ENCODE measurements at regions of chr14 and their contacts with region 1.

Region 1: GRCh38 chr14:59189786-59190771 is 1.6 kb downstream of the DAAM1 start:
- DNase-seq: peak; percentile 94 to 95
- ATAC-seq: peak; percentile 54

Region 2: GRCh38 chr14:58969951-58970751 is 219.9 kb before region 1 on chr14:
- intact Hi-C with region 1: no loop called
- DNase-seq: no peak
- ATAC-seq: no peak

Region 3: DNA sequence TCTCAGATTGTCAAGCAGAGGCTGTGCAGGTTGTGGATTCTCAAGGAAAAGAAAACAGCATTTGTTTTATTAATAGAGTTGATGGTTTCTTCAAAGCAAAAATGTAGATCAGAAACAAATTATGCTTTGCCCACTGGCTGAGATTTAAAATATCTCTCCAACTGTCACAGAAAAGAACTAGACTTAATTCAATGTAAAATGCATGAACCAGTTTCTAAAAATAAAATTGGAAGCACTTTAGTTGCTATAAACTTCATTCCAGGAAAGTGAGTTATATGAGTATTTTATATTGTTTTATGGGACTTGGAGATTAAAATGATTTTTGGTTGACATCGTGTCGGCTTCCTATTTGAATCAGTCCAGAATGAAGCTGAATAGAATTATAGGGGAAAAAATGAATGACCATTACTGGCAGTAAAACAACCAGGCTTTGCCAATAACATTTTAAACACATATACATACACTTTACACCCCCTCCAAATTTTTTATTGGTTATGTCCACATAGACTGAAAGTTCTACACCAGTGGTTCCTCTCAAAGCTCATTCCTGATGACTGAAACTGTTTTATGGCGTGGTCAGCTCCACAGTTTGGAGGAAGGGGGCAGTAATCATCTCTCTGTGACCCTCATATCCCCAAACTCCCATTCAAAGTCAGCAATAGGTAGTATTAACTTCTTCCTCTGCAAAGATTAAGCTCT is 57.1 kb before region 1 on chr14:
- intact Hi-C with region 1: loop called in 1 of 2 experiments (anchors 10 kb)
- DNase-seq: no peak
- ATAC-seq: peak; percentile 36

Measured in left colon (tissue), 2 donors.